ENCODE measurements at regions of chr11 and their contacts with region 1.

Region 1: GRCh38 chr11:128709402-128709801 is 15.5 kb downstream of the FLI1 start:
- DNase-seq: peak; percentile 99
- H3K4me3 ChIP-seq: no peak overlapping the region
- H3K27ac ChIP-seq: peak overlapping the region; percentile 97
- H3K4me1 ChIP-seq: peaks cover 88% of the 10 kb centered on the region
- H3K27me3 ChIP-seq: no peaks in the 10 kb centered on the region
- CTCF ChIP-seq: peak in 1 of 2 donors; percentile 5
- POLR2A ChIP-seq: peak; percentile 85

Region 2: DNA sequence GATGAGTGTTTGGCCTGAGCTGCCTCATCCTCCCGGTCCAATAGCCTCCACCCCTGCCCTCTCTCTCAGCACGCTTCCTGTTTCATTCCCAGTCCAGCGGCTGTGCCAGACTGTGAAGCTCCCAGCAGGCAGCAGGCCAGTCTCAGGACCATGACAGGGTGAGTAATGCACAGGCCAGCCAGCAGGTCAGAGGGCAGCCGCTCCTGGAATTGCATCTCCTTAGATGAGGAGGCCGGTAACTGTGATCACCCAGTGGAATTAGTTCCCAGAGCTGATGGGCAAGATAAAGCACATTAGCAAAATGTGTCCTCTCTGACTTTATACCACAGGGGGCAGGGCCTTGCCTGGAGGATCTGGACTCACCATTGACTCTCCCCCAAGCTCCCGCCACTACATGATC is 373.2 kb before region 1 on chr11:
- CTCF ChIA-PET with region 1: no interaction called
- POLR2A ChIA-PET with region 1: no interaction called
- dilution Hi-C with region 1: no loop called
- intact Hi-C with region 1: loop called (anchors 1 kb)
- DNase-seq: peak; percentile 88
- H3K4me3 ChIP-seq: no peak overlapping the region
- H3K27ac ChIP-seq: peak overlapping the region; percentile 87
- H3K4me1 ChIP-seq: peaks cover 43% of the 10 kb centered on the region
- H3K27me3 ChIP-seq: no peaks in the 10 kb centered on the region
- CTCF ChIP-seq: no peak
- POLR2A ChIP-seq: peak; percentile 17

Region 3: GRCh38 chr11:128678024-128678423 is 31.4 kb before region 1 on chr11:
- CTCF ChIA-PET with region 1: no interaction called
- POLR2A ChIA-PET with region 1: interaction called, 3 read pairs
- dilution Hi-C with region 1: no loop called
- intact Hi-C with region 1: loop called (anchors 1 kb)
- DNase-seq: peak; percentile 90
- H3K4me3 ChIP-seq: no peak overlapping the region
- H3K27ac ChIP-seq: peak overlapping the region; percentile 53
- H3K4me1 ChIP-seq: peaks cover 28% of the 10 kb centered on the region
- H3K27me3 ChIP-seq: no peaks in the 10 kb centered on the region
- CTCF ChIP-seq: no peak
- POLR2A ChIP-seq: peak; percentile 80

Region 4: DNA sequence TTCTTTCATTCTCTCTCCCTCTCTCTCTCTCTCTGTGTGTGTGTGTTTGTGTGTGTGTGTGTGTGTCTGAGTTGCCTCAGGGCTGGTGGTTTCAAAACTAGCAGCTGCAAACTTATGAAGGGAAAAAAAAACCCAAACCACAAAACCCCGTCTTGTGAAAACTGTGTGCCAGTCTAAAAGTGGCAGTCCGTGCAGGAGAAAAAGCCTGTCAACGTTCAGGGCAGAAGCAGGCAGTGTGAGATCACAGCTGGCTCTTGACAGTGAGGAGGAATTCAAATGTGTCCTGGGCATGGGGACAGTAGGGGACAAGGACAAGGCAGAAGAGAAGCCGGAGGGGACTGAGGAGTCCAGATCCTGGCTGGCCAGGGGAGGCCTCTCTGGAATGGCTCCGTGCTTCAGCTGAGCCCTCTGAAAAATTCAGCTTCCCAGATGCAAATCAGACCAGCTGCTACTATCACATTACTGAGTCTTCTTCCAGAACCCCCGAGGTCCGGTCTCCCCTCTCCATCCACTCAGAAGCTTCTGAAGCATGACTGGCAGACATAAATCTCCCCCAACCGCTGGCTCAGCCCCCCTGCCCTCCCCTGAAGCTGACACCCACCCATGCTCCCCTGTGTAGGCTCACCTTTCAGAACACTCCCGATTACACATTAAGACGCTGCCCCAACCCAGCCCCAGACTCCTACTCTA is 16.4 kb after region 1 on chr11:
- CTCF ChIA-PET with region 1: no interaction called
- POLR2A ChIA-PET with region 1: interaction called, 16 read pairs
- dilution Hi-C with region 1: no loop called
- intact Hi-C with region 1: loop called (anchors 1 kb)
- DNase-seq: no peak
- H3K4me3 ChIP-seq: no peak overlapping the region
- H3K27ac ChIP-seq: no peak overlapping the region
- H3K4me1 ChIP-seq: peaks cover 56% of the 10 kb centered on the region
- H3K27me3 ChIP-seq: no peaks in the 10 kb centered on the region
- CTCF ChIP-seq: no peak
- POLR2A ChIP-seq: no peak

Measured in endothelial cell of umbilical vein (primary cell).